ENCODE measurements at regions of chr11 and their contacts with region 1.

Region 1: DNA sequence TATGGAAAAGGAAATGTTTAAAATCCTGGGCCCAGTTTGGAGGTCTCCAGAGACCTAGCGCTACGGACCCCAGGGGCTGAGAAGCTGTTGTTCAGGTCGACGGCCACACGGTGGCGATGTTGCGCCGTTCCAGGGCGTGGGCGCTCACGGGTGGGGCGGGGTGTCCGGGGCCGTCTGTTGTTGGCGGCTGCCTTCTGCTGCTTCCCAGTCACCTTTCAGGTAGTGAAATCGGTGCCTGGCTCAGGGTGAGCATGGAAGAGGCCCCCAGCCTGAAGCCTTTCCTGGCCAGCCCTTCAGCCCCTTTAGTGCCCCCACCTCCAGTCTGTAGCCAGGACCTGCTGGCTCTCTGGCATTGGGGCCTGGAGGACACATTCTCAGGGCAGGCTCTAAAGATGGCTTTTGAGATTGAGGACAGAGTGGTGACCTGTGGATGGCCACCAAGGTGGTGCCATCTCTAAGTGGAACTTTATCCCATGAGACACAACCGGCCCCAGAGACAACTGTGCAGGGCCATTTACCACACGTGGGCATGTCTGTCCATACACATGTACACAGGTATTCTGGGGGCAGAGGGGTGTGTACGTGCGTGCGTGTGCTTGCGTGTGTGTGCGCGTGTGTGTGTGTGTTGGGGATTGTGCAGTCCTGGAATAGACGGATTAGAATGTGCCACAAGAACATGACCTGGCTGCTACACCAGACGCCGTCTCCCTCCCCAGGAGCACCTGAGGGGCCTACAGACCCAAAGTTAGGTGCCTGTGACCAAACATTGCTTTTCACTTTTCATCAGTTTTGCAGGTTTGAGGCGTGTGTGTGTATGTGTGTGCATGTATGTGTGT is 53.8 kb downstream of the ST14 start:
- DNase-seq: peak; percentile 83
- ATAC-seq: peak; percentile 88
- H3K4me3 Mint-ChIP-seq: no peak overlapping the region
- H3K27ac Mint-ChIP-seq: no peak overlapping the region
- H3K4me1 Mint-ChIP-seq: no peaks in the 10 kb centered on the region
- H3K27me3 Mint-ChIP-seq: peaks cover 2% of the 10 kb centered on the region

Region 2: GRCh38 chr11:130199792-130200191 is 13.6 kb before region 1 on chr11:
- CTCF ChIA-PET with region 1: interaction called, 12 read pairs
- POLR2A ChIA-PET with region 1: no interaction called
- intact Hi-C with region 1: no loop called
- DNase-seq: no peak
- ATAC-seq: no peak
- H3K4me3 Mint-ChIP-seq: no peak overlapping the region
- H3K27ac Mint-ChIP-seq: no peak overlapping the region
- H3K4me1 Mint-ChIP-seq: no peaks in the 10 kb centered on the region
- H3K27me3 Mint-ChIP-seq: no peaks in the 10 kb centered on the region

Region 3: DNA sequence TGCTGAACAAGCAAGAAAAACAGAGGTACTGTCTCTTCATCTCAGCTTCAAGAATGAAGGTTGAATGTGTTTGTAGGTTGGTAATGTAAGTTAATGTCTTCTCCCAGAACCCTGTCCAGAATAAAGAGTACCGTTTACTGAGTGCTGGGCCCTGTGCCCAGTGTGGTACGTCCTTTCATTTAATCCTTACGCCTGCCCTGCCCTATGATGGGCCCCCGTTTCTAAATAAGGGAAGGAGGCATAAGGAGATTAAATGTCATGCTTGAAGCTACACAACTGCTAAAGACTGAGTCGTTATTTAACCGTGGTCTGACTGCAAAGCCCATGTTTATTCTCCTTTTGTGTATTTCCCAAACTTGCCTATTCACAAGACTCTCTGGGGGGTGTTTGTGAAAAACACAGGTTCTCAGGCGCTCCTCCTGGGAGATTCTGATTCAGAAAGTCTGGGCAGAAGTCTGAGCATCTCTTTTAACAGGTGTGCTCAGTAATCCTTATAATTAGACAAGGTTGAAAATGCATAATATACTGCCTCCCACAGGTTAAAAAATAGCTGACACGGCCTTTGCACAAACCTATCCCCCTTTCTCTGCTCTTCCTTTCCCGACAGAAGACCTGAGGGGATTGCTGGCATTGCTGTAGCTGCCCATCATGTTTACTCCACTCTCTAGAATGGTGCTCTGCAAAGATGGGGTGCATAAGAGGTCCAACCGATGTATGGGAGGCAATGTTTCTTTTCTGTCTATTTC is 157.7 kb after region 1 on chr11:
- CTCF ChIA-PET with region 1: interaction called, 12 read pairs
- POLR2A ChIA-PET with region 1: no interaction called
- intact Hi-C with region 1: loop called (anchors 1 to 2 kb)
- DNase-seq: no peak
- ATAC-seq: no peak
- H3K4me3 Mint-ChIP-seq: no peak overlapping the region
- H3K27ac Mint-ChIP-seq: no peak overlapping the region
- H3K4me1 Mint-ChIP-seq: no peaks in the 10 kb centered on the region
- H3K27me3 Mint-ChIP-seq: no peaks in the 10 kb centered on the region

Region 4: DNA sequence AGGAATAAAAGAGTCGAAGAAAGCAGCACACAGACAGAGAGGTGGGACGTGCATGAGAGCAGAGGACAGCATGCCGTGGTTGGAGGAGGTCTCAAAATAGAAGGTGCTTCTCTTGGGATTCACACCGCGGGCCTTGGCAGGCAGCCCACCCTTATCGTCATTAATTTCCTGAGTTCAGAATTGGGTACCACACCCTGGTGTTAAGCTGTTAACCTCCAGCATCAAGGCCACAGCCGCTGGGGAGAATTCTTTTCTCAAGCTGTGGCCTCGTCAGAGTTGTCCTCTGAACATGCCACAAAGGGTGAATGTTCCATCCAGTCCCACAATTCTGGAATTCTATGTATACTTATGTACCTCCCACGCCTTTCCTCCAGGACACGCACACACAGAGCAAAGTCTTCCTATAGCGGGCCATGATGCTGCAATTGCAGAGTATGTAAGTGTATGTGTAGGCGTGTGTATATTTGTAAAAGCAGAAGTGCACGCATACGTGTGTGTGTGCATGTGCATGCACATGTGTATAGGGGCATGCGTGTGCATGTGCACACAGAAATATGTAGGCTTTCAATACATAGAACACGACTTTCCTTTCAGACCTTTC is 176.1 kb after region 1 on chr11:
- CTCF ChIA-PET with region 1: no interaction called
- POLR2A ChIA-PET with region 1: no interaction called
- intact Hi-C with region 1: loop called in 1 of 2 experiments (anchors 1 kb)
- DNase-seq: no peak
- ATAC-seq: no peak
- H3K4me3 Mint-ChIP-seq: no peak overlapping the region
- H3K27ac Mint-ChIP-seq: no peak overlapping the region
- H3K4me1 Mint-ChIP-seq: peaks cover 17% of the 10 kb centered on the region
- H3K27me3 Mint-ChIP-seq: no peaks in the 10 kb centered on the region

Region 5: DNA sequence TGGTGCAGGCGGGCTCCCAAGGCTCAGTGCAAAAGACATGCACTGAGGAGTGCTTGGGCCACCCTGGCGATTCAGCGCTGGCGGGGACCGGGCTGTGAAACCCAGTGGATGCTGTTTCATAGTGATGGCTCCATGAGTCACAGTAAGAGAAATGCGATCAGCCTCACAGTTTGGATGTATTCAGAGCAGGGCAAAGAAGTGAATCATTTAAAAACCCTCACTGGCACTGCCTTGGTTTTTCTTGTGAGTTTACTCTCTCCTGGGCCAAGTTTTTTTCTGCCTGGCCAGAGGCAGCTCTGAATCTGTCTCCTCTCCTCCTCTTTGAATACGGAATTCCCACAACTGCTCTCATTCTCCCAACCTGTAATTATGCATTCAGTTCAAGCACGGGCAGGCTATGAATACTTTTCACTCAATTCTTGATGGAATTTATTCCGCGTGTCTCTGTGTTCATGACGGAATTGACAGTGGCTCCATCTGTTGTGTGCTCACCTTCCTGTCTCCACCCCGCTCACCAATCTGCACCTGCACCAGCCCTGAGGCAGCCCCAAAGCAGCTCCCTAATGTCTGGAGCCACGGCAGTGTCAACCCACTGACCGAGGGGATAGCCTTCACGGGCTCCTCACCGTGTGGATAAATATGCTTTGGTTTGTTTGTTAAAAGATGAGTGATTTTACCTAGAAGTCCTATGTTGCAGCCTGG is 200.2 kb after region 1 on chr11:
- CTCF ChIA-PET with region 1: interaction called, 4 read pairs
- POLR2A ChIA-PET with region 1: no interaction called
- intact Hi-C with region 1: loop called in 1 of 2 experiments (anchors 5 kb)
- DNase-seq: peak; percentile 46
- ATAC-seq: peak; percentile 92
- H3K4me3 Mint-ChIP-seq: no peak overlapping the region
- H3K27ac Mint-ChIP-seq: no peak overlapping the region
- H3K4me1 Mint-ChIP-seq: no peaks in the 10 kb centered on the region
- H3K27me3 Mint-ChIP-seq: peaks cover 13% of the 10 kb centered on the region

Measured in activated CD4-positive, alpha-beta T cell treated with anti-CD3 and anti-CD28 coated beads for 36 hours (primary cell).